B cell (primary cell): ENCODE measurements at regions of chr7 and their contacts with region 1.

Region 1: DNA sequence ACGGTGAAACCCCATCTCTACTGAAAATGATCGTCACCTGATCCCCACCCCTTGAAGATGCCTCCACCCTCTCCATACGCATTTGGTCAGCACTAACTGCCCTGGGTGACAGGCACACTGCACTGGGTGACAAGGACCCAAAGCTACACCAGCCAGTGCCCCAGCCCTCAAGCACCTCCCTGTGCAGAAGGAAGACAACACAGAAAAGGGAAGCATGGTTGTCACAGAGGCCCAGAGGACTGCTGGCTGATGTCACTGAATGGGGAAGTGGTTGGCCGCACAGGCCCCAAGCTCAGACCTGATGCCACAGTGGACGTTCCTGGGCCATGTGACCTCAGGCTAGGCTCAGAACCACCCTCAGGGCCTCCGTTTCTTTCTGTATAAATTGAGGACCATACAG is 4.2 kb upstream of the PILRA start:
- DNase-seq: peak; percentile 95
- ATAC-seq: peak; percentile 84
- H3K4me3 ChIP-seq: no peak overlapping the region
- H3K4me3 Mint-ChIP-seq: peak overlapping the region; percentile 87
- H3K27ac ChIP-seq: peak overlapping the region; percentile 97 to 99
- H3K27ac Mint-ChIP-seq: peak overlapping the region; percentile 99
- H3K4me1 ChIP-seq: peaks cover 68 to 86% of the 10 kb centered on the region in 2 donors
- H3K4me1 Mint-ChIP-seq: peaks cover 81% of the 10 kb centered on the region
- H3K27me3 ChIP-seq: no peaks in the 10 kb centered on the region
- H3K27me3 Mint-ChIP-seq: no peaks in the 10 kb centered on the region
- CTCF ChIP-seq: no peak

Region 2: GRCh38 chr7:100358027-100358865 is 10.9 kb before region 1 on chr7 and contains the start of gene PILRB:
- CTCF ChIA-PET with region 1: interaction called, 11 read pairs
- POLR2A ChIA-PET with region 1: interaction called, 8 read pairs
- intact Hi-C with region 1: loop called (anchors 1 kb)
- DNase-seq: peak; percentile 69
- ATAC-seq: peak; percentile 88
- H3K4me3 ChIP-seq: no peak within 1 kb of the TSS
- H3K4me3 Mint-ChIP-seq: no peak within 1 kb of the TSS
- H3K27ac ChIP-seq: peak within 1 kb of the TSS; percentile 49 to 75
- H3K27ac Mint-ChIP-seq: peak within 1 kb of the TSS; percentile 90
- H3K4me1 ChIP-seq: peaks cover 10 to 24% of the 10 kb centered on the region in 2 donors
- H3K4me1 Mint-ChIP-seq: peaks cover 22% of the 10 kb centered on the region
- H3K27me3 ChIP-seq: no peaks in the 10 kb centered on the region
- H3K27me3 Mint-ChIP-seq: no peaks in the 10 kb centered on the region
- CTCF ChIP-seq: peak; percentile 48
- total RNA-seq, gene PILRB: 162 and 174 TPM in 2 replicates

Region 3: DNA sequence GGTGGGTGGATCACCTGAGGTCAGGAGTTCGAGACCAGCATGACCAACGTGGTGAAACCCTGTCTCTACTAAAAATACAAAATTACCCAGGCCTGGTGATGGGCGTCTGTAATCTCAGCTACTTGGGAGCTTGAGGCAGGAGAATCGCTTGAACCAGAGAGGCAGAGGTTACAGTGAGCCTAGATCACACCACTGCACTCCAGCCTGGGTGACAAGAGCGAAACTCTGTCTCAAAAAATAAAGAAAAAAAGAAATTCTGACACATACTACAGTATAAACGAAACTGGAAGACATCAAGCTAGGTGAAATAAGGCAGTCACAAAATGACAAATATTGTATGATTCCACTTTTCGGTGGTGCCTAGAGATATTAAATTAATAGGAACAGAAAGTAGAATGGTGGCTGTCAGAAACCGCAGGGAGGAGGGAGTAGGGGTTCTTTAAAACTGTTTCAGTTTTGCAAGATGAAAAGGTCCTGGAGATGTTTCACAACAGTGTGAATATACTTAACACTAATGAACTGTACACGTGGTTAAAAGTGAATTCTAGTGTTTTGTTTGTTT is 27.4 kb after region 1 on chr7:
- CTCF ChIA-PET with region 1: interaction called, 8 read pairs
- POLR2A ChIA-PET with region 1: interaction called, 11 read pairs
- intact Hi-C with region 1: loop called (anchors 1 kb)
- DNase-seq: peak; percentile 86
- ATAC-seq: peak; percentile 90
- H3K4me3 ChIP-seq: peak overlapping the region in 3 of 5 experiments; percentile 1 to 37 (median 8)
- H3K4me3 Mint-ChIP-seq: peak overlapping the region; percentile 74
- H3K27ac ChIP-seq: peak overlapping the region; percentile 67 to 82
- H3K27ac Mint-ChIP-seq: peak overlapping the region; percentile 93
- H3K4me1 ChIP-seq: peaks cover 30 to 41% of the 10 kb centered on the region in 2 donors
- H3K4me1 Mint-ChIP-seq: peaks cover 49% of the 10 kb centered on the region
- H3K27me3 ChIP-seq: no peaks in the 10 kb centered on the region
- H3K27me3 Mint-ChIP-seq: no peaks in the 10 kb centered on the region
- CTCF ChIP-seq: no peak

Region 4: GRCh38 chr7:100435401-100436304 is 66.5 kb after region 1 on chr7:
- CTCF ChIA-PET with region 1: interaction called, 6 read pairs
- POLR2A ChIA-PET with region 1: interaction called, 44 read pairs
- intact Hi-C with region 1: loop called (anchors 2 kb)
- DNase-seq: peak; percentile 81
- ATAC-seq: peak; percentile 28
- H3K4me3 ChIP-seq: peak overlapping the region; percentile 39 to 96 (median 81)
- H3K4me3 Mint-ChIP-seq: peak overlapping the region; percentile 98
- H3K27ac ChIP-seq: peak overlapping the region; percentile 87 to 91
- H3K27ac Mint-ChIP-seq: peak overlapping the region; percentile 99
- H3K4me1 ChIP-seq: peaks cover 26 to 46% of the 10 kb centered on the region in 2 donors
- H3K4me1 Mint-ChIP-seq: peaks cover 50% of the 10 kb centered on the region
- H3K27me3 ChIP-seq: no peaks in the 10 kb centered on the region
- H3K27me3 Mint-ChIP-seq: no peaks in the 10 kb centered on the region
- CTCF ChIP-seq: no peak

Region 5: DNA sequence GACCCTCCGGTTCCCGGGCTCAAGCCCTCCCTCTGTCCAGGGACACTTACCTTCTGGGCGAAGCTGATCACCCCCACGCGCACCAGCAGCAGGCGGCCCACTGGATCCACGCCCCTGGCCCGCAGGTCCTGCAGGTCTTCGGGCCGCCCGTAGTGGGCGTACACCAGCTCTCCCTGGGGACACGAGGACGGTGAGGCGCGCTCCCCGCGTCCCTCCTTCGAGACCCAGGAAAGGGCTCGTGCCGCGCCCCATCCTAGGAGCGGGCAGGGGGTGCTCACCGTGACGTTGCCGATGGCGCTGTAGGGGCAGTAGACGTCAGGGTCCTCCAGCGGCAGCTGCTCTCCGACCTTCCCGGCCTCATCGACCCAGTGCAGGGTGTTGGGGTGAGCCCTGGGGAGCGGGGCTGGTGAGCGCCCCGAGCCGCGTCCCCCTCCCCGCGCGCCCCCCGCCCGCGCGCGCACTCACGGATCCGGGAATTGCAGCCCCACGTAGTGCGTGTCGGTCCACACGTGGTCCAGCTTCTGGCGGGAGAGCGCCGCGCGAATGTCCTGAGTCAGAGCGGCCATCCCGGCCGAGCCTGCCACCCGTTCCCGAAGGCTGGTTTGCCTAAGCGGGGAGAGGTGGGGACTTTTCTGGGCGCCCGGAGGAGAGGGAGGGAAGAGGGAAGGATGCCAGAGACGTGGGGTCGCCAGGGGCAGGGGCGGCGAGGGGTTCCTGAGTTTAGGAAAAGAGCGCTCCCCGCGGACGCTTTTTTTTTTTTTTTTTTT is 264.0 kb after region 1 on chr7:
- CTCF ChIA-PET with region 1: no interaction called
- POLR2A ChIA-PET with region 1: no interaction called
- intact Hi-C with region 1: no loop called
- DNase-seq: peak; percentile 77
- ATAC-seq: peak; percentile 77
- H3K4me3 ChIP-seq: peak overlapping the region in 4 of 5 experiments; percentile 62 to 82 (median 72)
- H3K4me3 Mint-ChIP-seq: peak overlapping the region; percentile 90
- H3K27ac ChIP-seq: peak overlapping the region in 1 of 2 donors; percentile 48
- H3K27ac Mint-ChIP-seq: peak overlapping the region; percentile 83
- H3K4me1 ChIP-seq: peaks cover 6 to 15% of the 10 kb centered on the region in 2 donors
- H3K4me1 Mint-ChIP-seq: peaks cover 10% of the 10 kb centered on the region
- H3K27me3 ChIP-seq: peaks cover 0 to 3% (median 0%) of the 10 kb centered on the region in 4 experiments
- H3K27me3 Mint-ChIP-seq: no peaks in the 10 kb centered on the region
- CTCF ChIP-seq: no peak